ENCODE measurements at regions of chr4 and their contacts with region 1.

Region 1: GRCh38 chr4:78775303-78776030 is 683 bp upstream of the BMP2K start:
- DNase-seq: peak; percentile 76 to 86
- ATAC-seq: peak; percentile 85 to 87
- H3K4me3 ChIP-seq: peak overlapping the region; percentile 85 to 97 (median 92)
- H3K27ac ChIP-seq: peak overlapping the region; percentile 97 to 100 (median 98)
- H3K4me1 ChIP-seq: peaks cover 32 to 41% of the 10 kb centered on the region in 2 donors
- H3K27me3 ChIP-seq: no peaks in the 10 kb centered on the region
- CTCF ChIP-seq: no peak
- POLR2A ChIP-seq: peak in 1 of 2 donors; percentile 45

Region 2: GRCh38 chr4:77156533-77156911 is 1618.9 kb before region 1 on chr4:
- in situ Hi-C with region 1: no loop called
- intact Hi-C with region 1: loop called (anchors 5 kb)
- DNase-seq: peak; percentile 96 to 98
- ATAC-seq: peak; percentile 99
- H3K4me3 ChIP-seq: peak overlapping the region; percentile 73 to 92 (median 82)
- H3K27ac ChIP-seq: peak overlapping the region; percentile 76 to 87 (median 83)
- H3K4me1 ChIP-seq: peaks cover 0 to 19% of the 10 kb centered on the region in 2 donors
- H3K27me3 ChIP-seq: no peaks in the 10 kb centered on the region
- CTCF ChIP-seq: no peak
- POLR2A ChIP-seq: no peak

Region 3: GRCh38 chr4:77819843-77820648 is 955.4 kb before region 1 on chr4:
- in situ Hi-C with region 1: no loop called
- intact Hi-C with region 1: loop called (anchors 5 kb)
- DNase-seq: peak; percentile 90 to 92
- ATAC-seq: peak; percentile 81 to 82
- H3K4me3 ChIP-seq: peak overlapping the region; percentile 80 to 97 (median 92)
- H3K27ac ChIP-seq: peak overlapping the region; percentile 91 to 100 (median 98)
- H3K4me1 ChIP-seq: peaks cover 40 to 43% of the 10 kb centered on the region in 2 donors
- H3K27me3 ChIP-seq: no peaks in the 10 kb centered on the region
- CTCF ChIP-seq: peak in 1 of 5 experiments; percentile 23
- POLR2A ChIP-seq: peak; percentile 92 to 96

Region 4: DNA sequence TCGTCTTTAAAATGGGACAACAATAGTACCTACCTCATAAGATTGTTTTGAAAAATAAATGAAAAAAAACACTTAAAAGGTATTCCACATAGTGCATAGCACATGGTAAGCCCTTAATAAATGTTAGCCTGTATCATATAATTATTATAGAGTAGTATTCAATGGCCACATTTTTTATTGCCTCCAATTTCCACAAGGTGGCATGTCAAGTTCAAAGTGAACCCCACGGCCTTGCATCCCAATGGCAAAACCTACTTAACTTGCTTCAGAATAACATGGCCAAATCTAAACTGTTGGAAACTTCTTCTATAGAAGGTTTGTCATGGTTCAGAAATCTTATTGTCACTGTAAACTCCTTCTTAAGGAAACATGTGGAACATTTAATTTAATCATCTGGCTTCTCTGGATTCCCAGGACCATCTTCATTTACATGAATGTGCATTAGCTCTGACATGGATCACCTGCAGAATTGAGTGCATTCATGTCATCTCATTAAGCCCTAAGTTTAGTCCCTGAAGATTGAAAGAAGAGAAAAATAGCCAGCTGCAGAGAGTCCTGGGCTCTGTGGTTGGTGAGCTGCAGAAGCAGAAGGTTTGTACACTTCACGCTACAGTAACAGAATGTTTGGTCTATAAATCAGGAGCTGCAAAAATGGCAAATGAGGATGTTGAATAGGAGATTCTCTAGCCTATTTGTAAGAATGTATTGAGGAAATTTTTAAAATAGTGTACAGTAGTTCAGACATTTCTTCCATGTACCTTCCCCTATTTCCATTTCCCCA is 162.9 kb before region 1 on chr4:
- in situ Hi-C with region 1: no loop called
- intact Hi-C with region 1: loop called (anchors 10 kb)
- DNase-seq: no peak
- ATAC-seq: peak in 1 of 2 donors; percentile 65
- H3K4me3 ChIP-seq: no peak overlapping the region
- H3K27ac ChIP-seq: no peak overlapping the region
- H3K4me1 ChIP-seq: no peaks in the 10 kb centered on the region
- H3K27me3 ChIP-seq: no peaks in the 10 kb centered on the region
- CTCF ChIP-seq: peak in 4 of 5 experiments; percentile 35 to 58 (median 50)
- POLR2A ChIP-seq: no peak

Region 5: GRCh38 chr4:78644744-78645330 is 130.6 kb before region 1 on chr4:
- in situ Hi-C with region 1: loop called in 1 of 4 experiments (anchors 10 kb)
- intact Hi-C with region 1: loop called (anchors 5 kb)
- DNase-seq: peak in 1 of 2 donors; percentile 59
- ATAC-seq: peak; percentile 65 to 81
- H3K4me3 ChIP-seq: no peak overlapping the region
- H3K27ac ChIP-seq: peak overlapping the region; percentile 60 to 84 (median 74)
- H3K4me1 ChIP-seq: peaks cover 8 to 28% of the 10 kb centered on the region in 2 donors
- H3K27me3 ChIP-seq: no peaks in the 10 kb centered on the region
- CTCF ChIP-seq: peak; percentile 55 to 82 (median 76)
- POLR2A ChIP-seq: no peak

Region 6: GRCh38 chr4:78864405-78865024 is 89.0 kb after region 1 on chr4:
- in situ Hi-C with region 1: loop called in 1 of 4 experiments (anchors 10 kb)
- intact Hi-C with region 1: loop called (anchors 5 kb)
- DNase-seq: no peak
- ATAC-seq: peak; percentile 65 to 66
- H3K4me3 ChIP-seq: no peak overlapping the region
- H3K27ac ChIP-seq: no peak overlapping the region
- H3K4me1 ChIP-seq: no peaks in the 10 kb centered on the region
- H3K27me3 ChIP-seq: no peaks in the 10 kb centered on the region
- CTCF ChIP-seq: peak; percentile 63 to 80 (median 71)
- POLR2A ChIP-seq: no peak

Region 7: GRCh38 chr4:79788884-79789283 is 1013.4 kb after region 1 on chr4:
- in situ Hi-C with region 1: no loop called
- intact Hi-C with region 1: no loop called
- DNase-seq: no peak
- ATAC-seq: no peak
- H3K4me3 ChIP-seq: no peak overlapping the region
- H3K27ac ChIP-seq: no peak overlapping the region
- H3K4me1 ChIP-seq: no peaks in the 10 kb centered on the region
- H3K27me3 ChIP-seq: no peaks in the 10 kb centered on the region
- CTCF ChIP-seq: no peak
- POLR2A ChIP-seq: no peak

Region 8: GRCh38 chr4:79964400-79965211 is 1189.1 kb after region 1 on chr4:
- in situ Hi-C with region 1: no loop called
- intact Hi-C with region 1: loop called (anchors 5 kb)
- DNase-seq: no peak
- ATAC-seq: no peak
- H3K4me3 ChIP-seq: no peak overlapping the region
- H3K27ac ChIP-seq: peak overlapping the region in 1 of 4 donors; percentile 14
- H3K4me1 ChIP-seq: no peaks in the 10 kb centered on the region
- H3K27me3 ChIP-seq: no peaks in the 10 kb centered on the region
- CTCF ChIP-seq: no peak
- POLR2A ChIP-seq: no peak